Naive thymus-derived CD4-positive, alpha-beta T cell (primary cell): ENCODE measurements at regions of chr20 and their contacts with region 1.

Region 1: DNA sequence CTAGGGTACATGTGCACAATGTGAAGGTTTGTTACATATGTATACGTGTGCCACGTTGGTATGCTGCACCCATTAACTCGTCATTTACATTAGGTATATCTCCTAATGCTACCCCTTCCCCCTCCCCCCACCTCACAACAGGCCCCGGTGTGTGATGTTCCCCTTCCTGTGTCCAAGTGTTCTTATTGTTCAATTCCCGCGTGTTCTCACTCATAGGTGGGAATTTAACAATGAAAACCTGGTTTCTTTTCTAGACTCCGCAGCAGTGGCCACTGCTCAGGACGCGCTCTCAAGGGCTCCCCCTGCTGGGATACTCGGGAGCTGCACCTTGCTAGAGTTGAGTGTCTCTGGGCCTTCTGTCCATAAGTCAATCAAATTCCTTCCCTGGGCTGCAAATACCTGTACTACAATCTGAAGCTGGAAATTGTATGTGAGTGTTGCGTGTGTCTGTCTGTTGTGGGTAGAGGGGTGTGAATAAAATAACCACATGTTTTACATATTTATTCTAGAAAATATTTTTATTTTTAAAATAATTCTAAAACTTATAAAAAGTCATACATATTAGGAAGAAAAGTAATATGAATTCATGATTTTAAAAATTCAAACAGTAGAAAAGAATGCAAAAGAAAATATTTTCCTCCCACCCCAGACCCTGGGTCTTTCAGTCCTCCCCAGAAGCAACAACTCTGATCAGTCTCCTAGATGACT is 8.2 kb upstream of the CEP250 start:
- DNase-seq: peak; percentile 71 to 94 (median 83)
- ATAC-seq: peak; percentile 100
- H3K4me3 ChIP-seq: peak overlapping the region; percentile 53
- H3K4me3 Mint-ChIP-seq: peak overlapping the region; percentile 73 to 98 (median 90)
- H3K27ac ChIP-seq: no peak overlapping the region
- H3K27ac Mint-ChIP-seq: peak overlapping the region in 2 of 9 donors; percentile 71 to 80
- H3K4me1 ChIP-seq: peaks cover 0 to 3% of the 10 kb centered on the region in 2 donors
- H3K4me1 Mint-ChIP-seq: peaks cover 0 to 8% (median 4%) of the 10 kb centered on the region in 7 donors
- H3K27me3 ChIP-seq: no peaks in the 10 kb centered on the region
- H3K27me3 Mint-ChIP-seq: peaks cover 0 to 7% (median 2%) of the 10 kb centered on the region in 5 donors

Region 2: GRCh38 chr20:35303735-35304491 is 143.3 kb before region 1 on chr20:
- CTCF ChIA-PET with region 1: interaction called, 19 read pairs
- POLR2A ChIA-PET with region 1: no interaction called
- intact Hi-C with region 1: loop called (anchors 1 kb)
- DNase-seq: peak; percentile 57 to 87 (median 81)
- ATAC-seq: peak; percentile 96
- H3K4me3 ChIP-seq: no peak overlapping the region
- H3K4me3 Mint-ChIP-seq: no peak overlapping the region
- H3K27ac ChIP-seq: no peak overlapping the region
- H3K27ac Mint-ChIP-seq: peak overlapping the region in 6 of 9 donors; percentile 8 to 78 (median 60)
- H3K4me1 ChIP-seq: no peaks in the 10 kb centered on the region
- H3K4me1 Mint-ChIP-seq: peaks cover 0 to 40% (median 9%) of the 10 kb centered on the region in 7 donors
- H3K27me3 ChIP-seq: no peaks in the 10 kb centered on the region
- H3K27me3 Mint-ChIP-seq: no peaks in the 10 kb centered on the region

Region 3: DNA sequence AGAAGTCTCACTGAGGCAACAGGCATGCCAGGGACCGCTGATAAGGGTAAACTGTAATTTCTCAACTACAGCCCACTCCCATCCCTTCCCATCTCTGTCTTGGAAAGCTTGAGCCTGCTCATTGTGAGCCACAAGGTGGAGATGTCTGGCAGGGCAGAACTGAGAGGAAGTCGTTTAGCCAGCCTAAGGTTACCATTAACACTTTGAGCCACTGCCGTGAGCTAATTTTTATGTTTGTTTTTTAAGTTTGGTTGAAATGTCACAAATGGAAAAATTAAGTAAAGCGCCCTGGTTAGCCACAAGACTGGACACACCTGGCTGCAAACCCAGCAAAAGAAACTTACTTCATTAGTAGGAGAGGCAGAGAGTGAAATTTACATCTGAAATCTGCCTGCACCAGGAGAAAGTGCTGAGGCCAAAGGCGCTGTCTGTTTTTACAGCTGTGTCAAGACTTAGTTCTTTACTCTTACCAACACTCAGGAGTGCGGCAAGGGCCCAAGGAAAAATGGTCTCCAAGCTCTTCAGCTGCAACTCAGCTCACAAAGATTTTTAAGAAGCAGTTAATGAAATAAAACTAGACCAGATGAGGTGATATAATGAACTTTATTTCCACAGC is 105.0 kb before region 1 on chr20:
- CTCF ChIA-PET with region 1: no interaction called
- POLR2A ChIA-PET with region 1: no interaction called
- intact Hi-C with region 1: loop called in 1 of 2 experiments (anchors 2 kb)
- DNase-seq: no peak
- ATAC-seq: no peak
- H3K4me3 ChIP-seq: no peak overlapping the region
- H3K4me3 Mint-ChIP-seq: no peak overlapping the region
- H3K27ac ChIP-seq: no peak overlapping the region
- H3K27ac Mint-ChIP-seq: peak overlapping the region in 2 of 9 donors; percentile 44 to 51
- H3K4me1 ChIP-seq: no peaks in the 10 kb centered on the region
- H3K4me1 Mint-ChIP-seq: peaks cover 0 to 3% (median 0%) of the 10 kb centered on the region in 7 donors
- H3K27me3 ChIP-seq: no peaks in the 10 kb centered on the region
- H3K27me3 Mint-ChIP-seq: no peaks in the 10 kb centered on the region

Region 4: GRCh38 chr20:35410613-35411012 is 36.6 kb before region 1 on chr20:
- CTCF ChIA-PET with region 1: no interaction called
- POLR2A ChIA-PET with region 1: interaction called, 3 read pairs
- intact Hi-C with region 1: loop called (anchors 1 to 5 kb)
- DNase-seq: no peak
- ATAC-seq: no peak
- H3K4me3 ChIP-seq: peak overlapping the region; percentile 79
- H3K4me3 Mint-ChIP-seq: peak overlapping the region; percentile 92 to 100 (median 98)
- H3K27ac ChIP-seq: no peak overlapping the region
- H3K27ac Mint-ChIP-seq: peak overlapping the region in 8 of 9 donors; percentile 48 to 100 (median 97)
- H3K4me1 ChIP-seq: peaks cover 8 to 9% of the 10 kb centered on the region in 2 donors
- H3K4me1 Mint-ChIP-seq: peaks cover 17 to 24% (median 22%) of the 10 kb centered on the region in 7 donors
- H3K27me3 ChIP-seq: no peaks in the 10 kb centered on the region
- H3K27me3 Mint-ChIP-seq: peaks cover 0 to 2% (median 0%) of the 10 kb centered on the region in 5 donors

Region 5: DNA sequence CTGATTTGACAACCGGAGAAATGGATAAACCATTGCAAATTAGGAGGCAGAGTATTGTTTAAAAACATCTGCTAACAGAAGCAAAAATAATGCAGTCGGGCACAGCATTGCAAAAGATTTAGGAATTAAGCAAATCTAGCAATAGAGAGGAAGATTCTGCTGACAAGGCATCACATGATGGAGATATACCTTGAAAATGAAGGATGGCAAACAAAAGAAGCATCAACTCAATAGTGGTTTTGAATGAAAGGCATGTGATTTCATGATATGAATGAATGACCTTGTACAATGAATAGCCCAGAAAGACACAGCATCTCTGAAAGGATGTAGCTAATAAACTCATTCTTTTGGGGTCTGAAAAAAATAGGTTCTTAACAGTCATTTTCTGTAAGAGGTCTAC is 303.4 kb after region 1 on chr20:
- CTCF ChIA-PET with region 1: no interaction called
- POLR2A ChIA-PET with region 1: no interaction called
- intact Hi-C with region 1: no loop called
- DNase-seq: no peak
- ATAC-seq: no peak
- H3K4me3 ChIP-seq: no peak overlapping the region
- H3K4me3 Mint-ChIP-seq: no peak overlapping the region
- H3K27ac ChIP-seq: no peak overlapping the region
- H3K27ac Mint-ChIP-seq: no peak overlapping the region
- H3K4me1 ChIP-seq: no peaks in the 10 kb centered on the region
- H3K4me1 Mint-ChIP-seq: peaks cover 0 to 5% (median 0%) of the 10 kb centered on the region in 7 donors
- H3K27me3 ChIP-seq: no peaks in the 10 kb centered on the region
- H3K27me3 Mint-ChIP-seq: peaks cover 0 to 30% (median 0%) of the 10 kb centered on the region in 5 donors